Naive thymus-derived CD4-positive, alpha-beta T cell (primary cell): ENCODE measurements at regions of chr4 and their contacts with region 1.

Region 1: GRCh38 chr4:108650212-108651013 is at the start of gene OSTC:
- DNase-seq: peak; percentile 88 to 95 (median 91)
- ATAC-seq: peak; percentile 94
- H3K4me3 ChIP-seq: peak within 1 kb of the TSS; percentile 98
- H3K4me3 Mint-ChIP-seq: peak within 1 kb of the TSS; percentile 90 to 99 (median 94)
- H3K27ac ChIP-seq: peak within 1 kb of the TSS; percentile 96
- H3K27ac Mint-ChIP-seq: peak within 1 kb of the TSS; percentile 89 to 99 (median 98)
- H3K4me1 ChIP-seq: peaks cover 8 to 13% of the 10 kb centered on the region in 2 donors
- H3K4me1 Mint-ChIP-seq: peaks cover 22 to 49% (median 41%) of the 10 kb centered on the region in 7 donors
- H3K27me3 ChIP-seq: no peaks in the 10 kb centered on the region
- H3K27me3 Mint-ChIP-seq: no peaks in the 10 kb centered on the region
- total RNA-seq, gene OSTC: 31.8 to 98.2 (median 55.6) TPM

Region 2: DNA sequence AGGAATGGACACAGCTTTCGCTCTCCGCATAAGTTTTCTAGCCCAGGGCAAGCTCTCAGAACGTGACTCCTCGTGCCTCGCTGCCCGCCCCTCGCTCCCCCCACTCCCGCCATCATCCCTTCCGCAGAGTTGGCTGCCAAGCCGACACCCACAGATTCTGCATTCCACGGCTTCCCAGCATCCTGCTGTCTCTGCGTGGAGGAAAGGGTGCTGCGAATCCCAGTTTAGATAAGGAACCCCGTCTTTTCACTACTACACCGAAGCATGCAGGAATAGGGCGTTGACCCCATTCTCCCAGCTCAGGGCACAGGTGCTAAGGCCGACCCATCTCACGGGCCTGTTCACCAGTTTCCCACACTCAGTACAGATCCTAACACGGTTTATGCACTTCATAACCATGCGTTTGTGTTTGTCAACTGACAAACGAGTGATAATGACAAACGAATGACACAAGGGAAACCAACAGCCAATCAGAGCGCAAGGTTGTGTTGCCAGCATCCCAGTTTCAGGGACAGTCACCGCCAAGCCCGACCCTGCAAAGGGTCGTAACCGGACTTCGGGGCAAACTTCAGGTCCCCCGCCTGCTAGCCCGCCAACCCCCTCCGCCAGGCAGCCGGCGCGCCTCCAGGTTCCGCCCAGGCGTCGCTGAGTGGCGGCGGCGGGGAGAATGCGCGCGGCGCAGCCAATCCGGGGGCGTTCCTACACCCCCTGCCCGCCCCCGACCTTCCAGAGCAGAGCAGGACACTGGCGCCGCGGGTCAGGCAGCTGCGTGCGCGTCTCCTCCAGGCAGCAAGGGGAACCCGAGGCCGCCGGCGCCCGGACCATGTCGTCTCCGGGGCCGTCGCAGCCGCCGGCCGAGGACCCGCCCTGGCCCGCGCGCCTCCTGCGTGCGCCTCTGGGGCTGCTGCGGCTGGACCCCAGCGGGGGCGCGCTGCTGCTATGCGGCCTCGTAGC is 719.3 kb before region 1 on chr4 and contains the start of gene CYP2U1:
- CTCF ChIA-PET with region 1: no interaction called
- POLR2A ChIA-PET with region 1: no interaction called
- intact Hi-C with region 1: loop called (anchors 1 kb)
- DNase-seq: peak; percentile 74 to 84 (median 81)
- ATAC-seq: peak; percentile 96
- H3K4me3 ChIP-seq: peak within 1 kb of the TSS; percentile 86
- H3K4me3 Mint-ChIP-seq: peak within 1 kb of the TSS; percentile 90 to 98 (median 92)
- H3K27ac ChIP-seq: peak within 1 kb of the TSS; percentile 71
- H3K27ac Mint-ChIP-seq: peak within 1 kb of the TSS; percentile 65 to 98 (median 88)
- H3K4me1 ChIP-seq: peaks cover 8 to 12% of the 10 kb centered on the region in 2 donors
- H3K4me1 Mint-ChIP-seq: peaks cover 21 to 50% (median 35%) of the 10 kb centered on the region in 7 donors
- H3K27me3 ChIP-seq: no peaks in the 10 kb centered on the region
- H3K27me3 Mint-ChIP-seq: peaks cover 0 to 17% (median 0%) of the 10 kb centered on the region in 5 donors
- total RNA-seq, gene CYP2U1: 3.8 to 11.4 (median 5.8) TPM

Region 3: GRCh38 chr4:108488865-108489264 is 161.5 kb before region 1 on chr4:
- CTCF ChIA-PET with region 1: no interaction called
- POLR2A ChIA-PET with region 1: no interaction called
- intact Hi-C with region 1: no loop called
- DNase-seq: no peak
- ATAC-seq: no peak
- H3K4me3 ChIP-seq: no peak overlapping the region
- H3K4me3 Mint-ChIP-seq: no peak overlapping the region
- H3K27ac ChIP-seq: no peak overlapping the region
- H3K27ac Mint-ChIP-seq: peak overlapping the region in 1 of 9 donors; percentile 33
- H3K4me1 ChIP-seq: peaks cover 5 to 6% of the 10 kb centered on the region in 2 donors
- H3K4me1 Mint-ChIP-seq: peaks cover 8 to 34% (median 23%) of the 10 kb centered on the region in 7 donors
- H3K27me3 ChIP-seq: no peaks in the 10 kb centered on the region
- H3K27me3 Mint-ChIP-seq: no peaks in the 10 kb centered on the region

Region 4: DNA sequence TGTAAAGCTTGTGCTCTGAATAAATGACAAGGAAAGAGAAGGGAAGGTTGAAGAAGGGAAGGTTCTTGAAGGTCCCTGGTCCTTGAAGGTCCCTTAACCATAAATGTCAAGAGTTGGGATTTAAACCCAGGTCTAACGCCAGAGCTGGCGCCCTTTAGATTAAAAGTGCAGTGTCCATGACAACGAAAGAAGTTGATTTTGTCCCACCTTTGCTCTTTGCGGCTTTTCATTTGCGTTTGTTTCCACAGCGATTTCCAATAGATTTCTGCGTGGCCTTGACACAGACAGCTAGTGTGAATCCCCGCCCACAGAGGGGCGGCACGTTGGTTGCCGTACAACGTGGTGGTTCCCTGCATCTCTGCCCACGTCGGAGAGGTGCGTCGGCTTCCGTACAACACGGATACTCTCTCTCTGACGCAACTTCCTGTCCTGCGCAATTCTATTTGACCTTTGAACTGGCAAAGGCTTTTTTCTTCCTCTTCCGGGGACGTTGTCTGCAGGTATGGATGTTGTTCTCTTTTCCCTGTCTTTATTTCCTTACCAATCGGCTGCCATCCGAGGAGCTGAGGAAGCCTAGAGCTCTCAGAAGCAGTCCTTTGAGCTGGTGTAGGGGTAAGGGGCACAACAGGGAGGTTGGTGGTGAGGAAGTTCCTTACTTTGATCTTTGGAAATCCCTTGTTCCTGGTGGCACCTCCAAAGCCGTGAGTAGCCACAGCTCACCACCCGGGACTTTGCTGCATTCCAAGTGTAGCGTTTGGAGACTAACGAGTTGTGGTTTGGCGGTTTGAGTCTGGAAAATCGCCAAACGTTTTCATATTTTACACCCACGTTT is 30.1 kb before region 1 on chr4 and contains the start of gene RPL34:
- CTCF ChIA-PET with region 1: no interaction called
- POLR2A ChIA-PET with region 1: interaction called, 37 read pairs
- intact Hi-C with region 1: loop called (anchors 1 kb)
- DNase-seq: peak; percentile 85 to 99 (median 96)
- ATAC-seq: peak; percentile 100
- H3K4me3 ChIP-seq: peak within 1 kb of the TSS; percentile 98
- H3K4me3 Mint-ChIP-seq: peak within 1 kb of the TSS; percentile 87 to 99 (median 96)
- H3K27ac ChIP-seq: peak within 1 kb of the TSS; percentile 90
- H3K27ac Mint-ChIP-seq: peak within 1 kb of the TSS; percentile 95 to 99 (median 97)
- H3K4me1 ChIP-seq: peaks cover 29 to 30% of the 10 kb centered on the region in 2 donors
- H3K4me1 Mint-ChIP-seq: peaks cover 33 to 81% (median 66%) of the 10 kb centered on the region in 7 donors
- H3K27me3 ChIP-seq: no peaks in the 10 kb centered on the region
- H3K27me3 Mint-ChIP-seq: peaks cover 0 to 3% (median 0%) of the 10 kb centered on the region in 5 donors
- total RNA-seq, gene RPL34: 1,411 to 3,442 (median 3,215) TPM

Region 5: DNA sequence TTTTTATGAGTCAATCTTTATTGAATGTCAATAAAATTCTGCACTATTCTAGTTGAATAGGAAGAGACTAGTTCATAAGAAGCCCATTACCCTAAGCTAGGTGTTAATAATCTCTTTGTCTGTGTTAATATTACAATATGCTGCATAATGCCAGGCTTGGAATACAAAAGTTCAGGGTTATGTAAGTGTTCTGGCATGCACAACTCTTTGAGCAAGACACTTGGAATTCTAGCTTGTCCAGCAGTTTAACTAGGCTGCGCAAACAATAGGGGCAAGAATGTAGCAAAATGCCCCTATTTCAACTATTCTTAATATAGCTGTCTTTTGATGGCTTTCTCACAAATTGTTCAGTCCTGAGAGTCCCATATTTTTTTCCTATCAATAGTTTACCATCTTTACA is 143.7 kb after region 1 on chr4:
- CTCF ChIA-PET with region 1: no interaction called
- POLR2A ChIA-PET with region 1: no interaction called
- intact Hi-C with region 1: no loop called
- DNase-seq: no peak
- ATAC-seq: no peak
- H3K4me3 ChIP-seq: no peak overlapping the region
- H3K4me3 Mint-ChIP-seq: no peak overlapping the region
- H3K27ac ChIP-seq: no peak overlapping the region
- H3K27ac Mint-ChIP-seq: no peak overlapping the region
- H3K4me1 ChIP-seq: no peaks in the 10 kb centered on the region
- H3K4me1 Mint-ChIP-seq: no peaks in the 10 kb centered on the region
- H3K27me3 ChIP-seq: no peaks in the 10 kb centered on the region
- H3K27me3 Mint-ChIP-seq: peaks cover 0 to 16% (median 0%) of the 10 kb centered on the region in 5 donors

Region 6: GRCh38 chr4:109729718-109730618 is 1079.6 kb after region 1 on chr4 and contains the start of gene PLA2G12A:
- CTCF ChIA-PET with region 1: no interaction called
- POLR2A ChIA-PET with region 1: no interaction called
- intact Hi-C with region 1: loop called in 1 of 2 experiments (anchors 1 kb)
- DNase-seq: peak; percentile 75 to 91 (median 86)
- ATAC-seq: peak; percentile 96
- H3K4me3 ChIP-seq: peak within 1 kb of the TSS; percentile 96
- H3K4me3 Mint-ChIP-seq: peak within 1 kb of the TSS; percentile 88 to 96 (median 92)
- H3K27ac ChIP-seq: peak within 1 kb of the TSS; percentile 78
- H3K27ac Mint-ChIP-seq: peak within 1 kb of the TSS; percentile 64 to 95 (median 90)
- H3K4me1 ChIP-seq: peaks cover 10 to 14% of the 10 kb centered on the region in 2 donors
- H3K4me1 Mint-ChIP-seq: peaks cover 12 to 39% (median 30%) of the 10 kb centered on the region in 7 donors
- H3K27me3 ChIP-seq: no peaks in the 10 kb centered on the region
- H3K27me3 Mint-ChIP-seq: peaks cover 0 to 4% (median 0%) of the 10 kb centered on the region in 5 donors
- total RNA-seq, gene PLA2G12A: 11.5 to 15.4 (median 14.5) TPM